ENCODE measurements at regions of chr3 and their contacts with region 1.

Region 1: GRCh38 chr3:141796081-141796888 is 33.1 kb downstream of the GRK7 start:
- DNase-seq: peak in 1 of 2 donors; percentile 34
- ATAC-seq: peak in 6 of 8 donors; percentile 2 to 72 (median 20)
- H3K4me3 ChIP-seq: peak overlapping the region in 5 of 10 donors; percentile 45 to 60 (median 56)
- H3K27ac ChIP-seq: peak overlapping the region in 9 of 10 donors; percentile 69 to 97 (median 85)
- H3K4me1 ChIP-seq: peaks cover 8 to 39% (median 28%) of the 10 kb centered on the region in 9 donors
- H3K27me3 ChIP-seq: no peaks in the 10 kb centered on the region
- CTCF ChIP-seq: no peak

Region 2: DNA sequence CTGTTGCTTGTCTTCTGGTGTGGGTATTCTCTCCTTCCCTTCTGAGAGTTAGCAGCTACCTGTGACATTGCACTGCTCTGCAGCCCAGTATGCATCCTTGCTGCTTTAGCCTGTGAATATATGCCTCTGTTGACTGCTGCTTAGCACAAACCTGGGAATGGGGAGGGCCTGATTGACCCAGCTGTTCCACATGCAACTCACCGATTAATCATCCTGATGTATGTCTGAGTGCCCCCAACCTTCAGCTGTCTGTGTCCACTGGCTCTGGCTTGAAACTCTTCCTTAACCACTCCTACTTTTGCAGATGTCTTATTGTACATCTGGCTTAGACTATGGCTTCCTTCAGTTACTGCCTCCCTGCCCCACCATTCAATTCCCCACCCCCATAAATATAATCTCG is 190.4 kb before region 1 on chr3:
- intact Hi-C with region 1: no loop called
- DNase-seq: no peak
- ATAC-seq: no peak
- H3K4me3 ChIP-seq: no peak overlapping the region
- H3K27ac ChIP-seq: no peak overlapping the region
- H3K4me1 ChIP-seq: peaks cover 0 to 18% (median 13%) of the 10 kb centered on the region in 9 donors
- H3K27me3 ChIP-seq: no peaks in the 10 kb centered on the region
- CTCF ChIP-seq: no peak

Region 3: DNA sequence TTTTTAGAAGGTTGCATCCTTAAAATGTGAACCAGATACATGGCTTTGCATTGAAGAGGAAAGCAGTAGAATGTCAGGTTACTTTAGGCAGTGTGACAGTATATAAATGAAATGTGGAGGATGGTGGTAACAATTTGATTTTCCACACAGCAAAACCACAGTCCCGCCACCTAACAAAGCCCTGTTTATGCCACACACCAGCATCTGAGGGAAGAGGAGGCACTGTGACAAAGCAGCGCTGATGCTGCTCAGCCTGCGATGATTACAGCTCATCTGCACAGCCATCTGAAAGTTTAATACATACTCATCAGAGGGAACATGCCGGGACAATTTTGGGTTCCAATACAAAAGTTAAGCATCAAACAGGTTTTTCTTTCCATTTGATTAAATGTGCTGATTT is 49.3 kb before region 1 on chr3:
- intact Hi-C with region 1: loop called in 1 of 10 experiments (anchors 10 kb)
- DNase-seq: no peak
- ATAC-seq: no peak
- H3K4me3 ChIP-seq: no peak overlapping the region
- H3K27ac ChIP-seq: no peak overlapping the region
- H3K4me1 ChIP-seq: peaks cover 0 to 28% (median 22%) of the 10 kb centered on the region in 9 donors
- H3K27me3 ChIP-seq: no peaks in the 10 kb centered on the region
- CTCF ChIP-seq: no peak

Region 4: DNA sequence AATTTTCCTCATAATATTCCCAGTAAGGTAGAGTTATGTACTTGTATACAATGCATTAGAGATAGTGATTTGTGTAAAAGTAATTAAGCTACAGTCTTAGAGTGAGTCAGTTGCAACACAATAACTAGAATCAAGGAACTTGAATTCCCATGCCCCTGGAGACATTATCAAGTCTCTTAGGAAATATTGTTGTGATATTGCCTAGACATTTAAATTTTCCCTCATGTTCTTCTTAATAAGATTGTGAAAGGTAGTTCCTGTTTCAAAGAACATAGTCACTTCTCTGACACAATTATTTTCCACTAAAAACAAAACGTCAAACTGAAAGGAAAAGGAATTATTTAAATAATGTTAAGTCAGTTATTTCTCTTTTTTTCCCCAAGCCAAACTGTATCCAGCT is 67.2 kb after region 1 on chr3:
- intact Hi-C with region 1: loop called in 2 of 10 experiments (anchors 5 kb)
- DNase-seq: no peak
- ATAC-seq: peak in 4 of 8 donors; percentile 28 to 68 (median 48)
- H3K4me3 ChIP-seq: no peak overlapping the region
- H3K27ac ChIP-seq: peak overlapping the region in 7 of 10 donors; percentile 4 to 77 (median 19)
- H3K4me1 ChIP-seq: peaks cover 3 to 43% (median 22%) of the 10 kb centered on the region in 9 donors
- H3K27me3 ChIP-seq: no peaks in the 10 kb centered on the region
- CTCF ChIP-seq: no peak

Measured in heart right ventricle (tissue), 16 donors.